GM10248 (cell line): ENCODE measurements at regions of chr6 and their contacts with region 1.

Region 1: DNA sequence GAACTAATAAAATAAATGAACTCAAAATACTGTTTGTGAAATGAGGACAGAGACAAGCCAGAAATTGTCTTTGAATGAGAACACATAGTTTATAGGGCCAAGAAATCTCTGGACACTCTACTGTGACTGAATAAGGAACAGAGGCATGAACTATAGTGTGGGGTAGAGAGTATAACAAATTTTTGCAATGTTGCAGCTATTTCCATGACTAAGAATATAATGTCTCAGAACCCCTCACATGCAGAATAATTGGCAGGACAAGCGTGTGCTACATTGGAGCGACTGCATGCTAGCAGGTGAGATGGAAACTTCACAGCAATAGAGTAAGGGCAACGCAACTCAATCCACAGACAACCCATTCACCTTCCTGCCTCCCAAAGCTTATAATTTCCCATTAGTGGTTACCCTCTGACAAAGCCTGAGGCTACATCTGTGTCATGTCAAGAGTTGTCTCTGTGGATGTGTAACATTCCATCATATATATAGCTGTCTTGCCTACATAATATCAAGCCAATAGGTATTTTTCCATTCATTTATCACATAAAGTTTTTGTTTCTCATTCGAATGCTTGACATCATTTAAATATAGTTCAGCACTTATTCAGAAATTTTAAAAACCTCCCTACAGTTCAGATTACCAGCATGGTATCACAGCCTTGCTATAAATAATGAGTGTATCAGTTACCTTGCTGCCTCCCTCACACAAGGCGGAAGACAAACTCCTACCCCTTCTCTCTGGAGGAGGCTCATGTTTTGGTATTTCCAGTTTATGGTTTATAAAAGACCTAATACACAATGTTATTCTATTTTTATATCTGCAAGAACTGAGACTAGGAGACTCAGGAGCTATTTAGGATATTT is 47.9 kb upstream of the ECHDC1 start:
- DNase-seq: no peak
- CTCF ChIP-seq: no peak

Region 2: GRCh38 chr6:127092466-127092865 is 298.9 kb before region 1 on chr6:
- CTCF ChIA-PET with region 1: no interaction called
- POLR2A ChIA-PET with region 1: no interaction called
- DNase-seq: no peak
- CTCF ChIP-seq: no peak

Region 3: DNA sequence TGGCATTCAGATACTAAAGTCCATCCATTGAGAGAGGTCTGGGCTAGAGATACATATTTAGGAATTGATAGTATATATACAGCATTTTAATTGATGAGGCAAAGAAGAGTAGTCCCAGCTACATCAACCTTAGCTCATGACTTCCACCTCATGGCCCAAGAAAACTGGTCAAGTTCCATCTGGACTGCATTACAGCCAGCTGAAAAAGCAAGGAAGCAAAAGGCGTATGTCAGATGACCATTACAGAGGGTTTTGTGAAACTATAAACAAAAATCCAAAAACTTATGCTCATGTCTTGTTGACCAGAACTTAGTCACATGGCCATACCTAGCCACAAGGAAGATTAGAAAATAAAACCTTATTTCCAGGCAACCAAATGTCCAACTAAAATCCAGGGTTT is 171.5 kb before region 1 on chr6:
- CTCF ChIA-PET with region 1: no interaction called
- POLR2A ChIA-PET with region 1: no interaction called
- DNase-seq: no peak
- CTCF ChIP-seq: no peak

Region 4: DNA sequence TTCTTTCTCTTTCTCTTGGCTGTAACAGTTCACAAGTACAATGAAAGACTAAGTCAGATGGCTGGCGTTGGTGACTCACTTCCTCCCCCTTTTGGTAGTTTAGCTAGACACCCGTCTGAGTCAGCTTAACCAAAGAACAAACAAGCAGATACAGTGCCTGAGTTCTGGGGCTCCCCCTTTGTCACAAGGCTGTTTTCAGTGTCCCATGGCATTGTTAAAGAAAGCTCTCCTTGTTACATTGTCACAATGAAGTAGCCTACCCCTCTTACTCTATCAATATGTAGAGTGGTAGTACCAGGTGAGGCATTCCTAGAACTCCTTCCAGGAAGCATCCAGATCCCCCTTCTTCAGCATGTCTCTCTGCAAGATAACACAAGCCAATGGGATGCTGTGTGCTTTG is 29.2 kb after region 1 on chr6:
- CTCF ChIA-PET with region 1: interaction called, 16 read pairs
- POLR2A ChIA-PET with region 1: no interaction called
- DNase-seq: peak; percentile 83
- CTCF ChIP-seq: peak; percentile 69